Common myeloid progenitor, CD34-positive (primary cell): ENCODE measurements at regions of chr2 and their contacts with region 1.

Region 1: GRCh38 chr2:206783718-206784117 is 18.3 kb downstream of the FASTKD2 start:
- DNase-seq: peak in 2 of 3 donors; percentile 31 to 38
- H3K4me3 ChIP-seq: no peak overlapping the region
- H3K27ac ChIP-seq: no peak overlapping the region
- H3K4me1 ChIP-seq: no peaks in the 10 kb centered on the region
- H3K27me3 ChIP-seq: no peaks in the 10 kb centered on the region

Region 2: GRCh38 chr2:206765242-206766056 is 18.3 kb before region 1 on chr2 and contains the starts of genes FASTKD2 and MDH1B:
- CTCF ChIA-PET with region 1: interaction called, 40 read pairs
- POLR2A ChIA-PET with region 1: no interaction called
- DNase-seq: peak; percentile 96 to 97 (median 97)
- H3K4me3 ChIP-seq: peak within 1 kb of the TSS; percentile 67 to 97 (median 91)
- H3K27ac ChIP-seq: peak within 1 kb of the TSS; percentile 95 to 98
- H3K4me1 ChIP-seq: peaks cover 6 to 29% (median 16%) of the 10 kb centered on the region in 4 experiments
- H3K27me3 ChIP-seq: peaks cover 0 to 3% (median 0%) of the 10 kb centered on the region in 5 experiments